Endothelial cell of umbilical vein (primary cell): ENCODE measurements at regions of chr6 and their contacts with region 1.

Region 1: DNA sequence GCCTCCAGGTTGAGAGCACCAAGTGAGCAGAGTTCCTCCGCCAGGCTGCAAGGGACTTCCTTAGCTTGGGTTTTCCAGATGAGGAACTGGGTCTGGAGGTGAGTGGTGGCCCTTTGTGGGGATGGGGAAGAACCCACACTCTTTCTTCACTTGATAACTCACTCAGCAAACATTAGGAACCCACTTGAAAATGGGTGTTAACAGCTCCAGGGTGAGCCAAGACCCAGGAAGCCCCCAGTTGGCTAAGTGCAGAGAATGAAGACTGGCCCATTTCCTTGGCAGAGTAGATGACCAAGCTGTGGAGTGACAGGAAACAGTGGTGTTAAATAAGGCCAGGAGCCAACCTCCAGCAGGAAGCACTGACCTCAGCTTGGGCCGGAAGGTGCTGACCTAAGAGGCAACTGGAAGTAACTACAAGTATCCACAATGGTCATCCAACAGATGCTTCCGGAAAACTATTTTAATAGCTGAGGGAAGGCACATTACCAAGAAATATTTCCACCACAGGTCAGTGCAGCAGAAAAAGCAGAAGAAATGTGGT is 22.7 kb downstream of the MRPL14 start:
- DNase-seq: peak; percentile 97
- H3K4me3 ChIP-seq: no peak overlapping the region
- H3K27ac ChIP-seq: peak overlapping the region; percentile 89
- H3K4me1 ChIP-seq: peaks cover 37% of the 10 kb centered on the region
- H3K27me3 ChIP-seq: no peaks in the 10 kb centered on the region
- CTCF ChIP-seq: no peak
- POLR2A ChIP-seq: peak; percentile 84

Region 2: GRCh38 chr6:44041461-44042260 is 62.9 kb before region 1 on chr6:
- CTCF ChIA-PET with region 1: no interaction called
- POLR2A ChIA-PET with region 1: no interaction called
- dilution Hi-C with region 1: no loop called
- intact Hi-C with region 1: no loop called
- DNase-seq: peak; percentile 82
- H3K4me3 ChIP-seq: no peak overlapping the region
- H3K27ac ChIP-seq: peak overlapping the region; percentile 72
- H3K4me1 ChIP-seq: peaks cover 26% of the 10 kb centered on the region
- H3K27me3 ChIP-seq: no peaks in the 10 kb centered on the region
- CTCF ChIP-seq: no peak
- POLR2A ChIP-seq: peak; percentile 32

Region 3: GRCh38 chr6:44116641-44117382 is 12.3 kb after region 1 on chr6:
- CTCF ChIA-PET with region 1: interaction called, 28 read pairs
- POLR2A ChIA-PET with region 1: no interaction called
- dilution Hi-C with region 1: no loop called
- intact Hi-C with region 1: loop called (anchors 1 kb)
- DNase-seq: peak; percentile 81
- H3K4me3 ChIP-seq: no peak overlapping the region
- H3K27ac ChIP-seq: peak overlapping the region; percentile 73
- H3K4me1 ChIP-seq: peaks cover 33% of the 10 kb centered on the region
- H3K27me3 ChIP-seq: no peaks in the 10 kb centered on the region
- CTCF ChIP-seq: no peak
- POLR2A ChIP-seq: no peak

Region 4: GRCh38 chr6:44237813-44238433 is 133.4 kb after region 1 on chr6:
- CTCF ChIA-PET with region 1: interaction called, 6 read pairs
- POLR2A ChIA-PET with region 1: no interaction called
- dilution Hi-C with region 1: loop called (anchors 10 kb)
- intact Hi-C with region 1: loop called (anchors 1 kb)
- DNase-seq: peak; percentile 67
- H3K4me3 ChIP-seq: peak overlapping the region in 1 of 3 experiments; percentile 35
- H3K27ac ChIP-seq: peak overlapping the region; percentile 70
- H3K4me1 ChIP-seq: peaks cover 41% of the 10 kb centered on the region
- H3K27me3 ChIP-seq: no peaks in the 10 kb centered on the region
- CTCF ChIP-seq: peak; percentile 99
- POLR2A ChIP-seq: peak; percentile 13